MCF 10A (cell line): ENCODE measurements at regions of chr20 and their contacts with region 1.

Region 1: DNA sequence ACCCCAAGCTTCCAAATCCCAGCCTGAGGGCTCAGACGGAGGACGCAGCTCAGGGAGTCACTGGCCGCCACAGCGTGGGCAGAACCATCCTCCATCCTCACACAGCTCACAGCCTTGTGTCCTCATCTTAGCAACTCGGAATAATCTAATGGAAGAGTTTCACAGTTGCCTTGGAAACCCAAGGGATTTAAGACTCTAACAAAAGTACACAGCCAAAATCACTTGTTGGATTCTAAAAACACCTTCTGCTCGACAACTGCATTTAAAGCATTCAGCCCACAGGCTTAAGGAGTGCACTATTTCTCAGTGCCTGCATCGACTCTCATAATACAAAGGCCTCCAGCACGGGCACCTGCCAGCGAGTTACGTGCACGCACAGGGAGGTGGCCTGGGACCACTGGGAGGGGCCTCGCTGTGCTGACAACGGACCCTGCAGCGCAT is 45.4 kb downstream of the ZBTB46 start:
- DNase-seq: no peak
- H3K4me3 Mint-ChIP-seq: no peak overlapping the region
- H3K27ac Mint-ChIP-seq: no peak overlapping the region
- H3K4me1 Mint-ChIP-seq: no peaks in the 10 kb centered on the region
- H3K27me3 Mint-ChIP-seq: no peaks in the 10 kb centered on the region
- CTCF ChIP-seq: no peak

Region 2: DNA sequence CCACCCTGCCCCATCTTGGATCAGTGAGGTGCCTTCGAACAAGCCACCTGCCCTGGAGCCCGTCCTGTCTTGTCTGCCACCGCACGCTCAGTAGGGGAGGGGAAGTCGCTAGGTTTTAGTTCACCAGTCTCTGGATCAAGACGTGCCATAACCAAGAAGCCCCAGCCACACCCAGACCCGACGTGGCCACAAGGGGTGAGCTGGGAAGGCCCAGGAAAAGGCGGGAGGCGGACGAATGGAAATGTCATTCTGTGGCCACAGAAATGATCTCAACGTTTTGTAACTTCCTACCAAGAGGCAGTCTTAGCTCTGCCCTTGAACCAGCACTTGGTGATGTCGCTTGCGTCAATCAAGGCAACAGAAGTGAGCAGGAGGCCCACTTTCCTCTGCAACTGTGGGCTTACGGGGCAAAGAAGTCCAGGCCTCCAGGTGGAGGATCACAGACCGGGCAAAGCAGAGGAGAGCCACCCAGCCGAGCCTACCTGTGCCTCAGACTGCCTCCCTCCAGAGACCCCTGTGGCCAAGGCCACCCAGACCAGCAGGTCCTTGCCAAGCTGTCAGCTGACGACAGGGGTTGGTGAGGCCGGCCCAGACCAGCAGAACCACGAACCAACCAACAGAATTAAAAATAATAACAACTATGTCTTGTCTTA is 173.3 kb before region 1 on chr20:
- CTCF ChIA-PET with region 1: no interaction called
- POLR2A ChIA-PET with region 1: no interaction called
- intact Hi-C with region 1: no loop called
- DNase-seq: no peak
- H3K4me3 Mint-ChIP-seq: no peak overlapping the region
- H3K27ac Mint-ChIP-seq: no peak overlapping the region
- H3K4me1 Mint-ChIP-seq: no peaks in the 10 kb centered on the region
- H3K27me3 Mint-ChIP-seq: no peaks in the 10 kb centered on the region
- CTCF ChIP-seq: no peak

Region 3: GRCh38 chr20:63731392-63731791 is 54.3 kb before region 1 on chr20:
- CTCF ChIA-PET with region 1: no interaction called
- POLR2A ChIA-PET with region 1: no interaction called
- intact Hi-C with region 1: no loop called
- DNase-seq: no peak
- H3K4me3 Mint-ChIP-seq: no peak overlapping the region
- H3K27ac Mint-ChIP-seq: no peak overlapping the region
- H3K4me1 Mint-ChIP-seq: no peaks in the 10 kb centered on the region
- H3K27me3 Mint-ChIP-seq: no peaks in the 10 kb centered on the region
- CTCF ChIP-seq: no peak

Region 4: DNA sequence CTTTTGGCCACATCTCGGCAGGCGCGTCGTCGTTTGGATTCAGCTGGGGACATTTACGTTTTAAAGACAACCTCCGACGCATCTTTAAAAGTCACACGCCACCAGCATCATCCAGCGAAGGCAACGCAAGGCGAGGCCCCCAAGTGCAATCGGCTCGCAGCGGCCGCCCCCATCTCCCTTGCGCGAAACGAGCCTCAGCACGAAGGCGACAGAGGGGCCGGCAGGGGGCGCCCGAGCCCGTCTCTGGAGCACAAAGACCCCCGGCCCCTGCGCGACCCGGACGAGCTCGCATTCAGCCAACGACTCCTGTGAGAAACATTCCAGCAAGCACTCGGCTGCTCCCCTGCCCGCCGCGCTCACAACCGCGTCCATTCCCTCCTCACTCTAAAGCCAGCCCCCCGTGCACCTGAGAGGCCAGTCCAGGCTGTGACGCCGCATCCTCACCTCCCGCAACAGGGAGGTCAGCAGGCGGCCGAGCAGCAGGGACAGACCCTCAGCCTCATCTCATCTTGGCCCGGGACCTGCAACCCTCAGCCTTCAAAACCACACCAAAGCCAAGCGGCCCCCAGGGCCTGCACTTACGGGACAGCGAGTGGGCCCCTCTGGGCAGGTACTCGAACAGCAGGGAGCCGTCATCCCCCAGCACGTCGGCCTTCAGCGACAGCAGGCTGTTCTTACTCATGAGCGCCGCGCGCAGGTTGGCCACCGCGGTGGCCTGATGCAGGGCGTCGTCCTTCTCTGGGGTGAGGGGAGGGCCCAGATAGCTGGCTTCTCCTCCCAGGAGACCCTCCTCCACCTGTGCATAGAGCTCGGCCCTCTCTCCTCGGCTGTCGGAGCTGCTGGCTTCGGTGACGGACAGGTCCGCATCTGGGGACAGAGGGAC is 10.4 kb before region 1 on chr20:
- CTCF ChIA-PET with region 1: interaction called, 33 read pairs
- POLR2A ChIA-PET with region 1: no interaction called
- intact Hi-C with region 1: no loop called
- DNase-seq: no peak
- H3K4me3 Mint-ChIP-seq: no peak overlapping the region
- H3K27ac Mint-ChIP-seq: no peak overlapping the region
- H3K4me1 Mint-ChIP-seq: peaks cover 9% of the 10 kb centered on the region
- H3K27me3 Mint-ChIP-seq: no peaks in the 10 kb centered on the region
- CTCF ChIP-seq: peak; percentile 44

Region 5: GRCh38 chr20:63804308-63804636 is 18.6 kb after region 1 on chr20:
- CTCF ChIA-PET with region 1: interaction called, 10 read pairs
- POLR2A ChIA-PET with region 1: no interaction called
- intact Hi-C with region 1: no loop called
- DNase-seq: no peak
- H3K4me3 Mint-ChIP-seq: no peak overlapping the region
- H3K27ac Mint-ChIP-seq: no peak overlapping the region
- H3K4me1 Mint-ChIP-seq: no peaks in the 10 kb centered on the region
- H3K27me3 Mint-ChIP-seq: no peaks in the 10 kb centered on the region
- CTCF ChIP-seq: no peak

Region 6: DNA sequence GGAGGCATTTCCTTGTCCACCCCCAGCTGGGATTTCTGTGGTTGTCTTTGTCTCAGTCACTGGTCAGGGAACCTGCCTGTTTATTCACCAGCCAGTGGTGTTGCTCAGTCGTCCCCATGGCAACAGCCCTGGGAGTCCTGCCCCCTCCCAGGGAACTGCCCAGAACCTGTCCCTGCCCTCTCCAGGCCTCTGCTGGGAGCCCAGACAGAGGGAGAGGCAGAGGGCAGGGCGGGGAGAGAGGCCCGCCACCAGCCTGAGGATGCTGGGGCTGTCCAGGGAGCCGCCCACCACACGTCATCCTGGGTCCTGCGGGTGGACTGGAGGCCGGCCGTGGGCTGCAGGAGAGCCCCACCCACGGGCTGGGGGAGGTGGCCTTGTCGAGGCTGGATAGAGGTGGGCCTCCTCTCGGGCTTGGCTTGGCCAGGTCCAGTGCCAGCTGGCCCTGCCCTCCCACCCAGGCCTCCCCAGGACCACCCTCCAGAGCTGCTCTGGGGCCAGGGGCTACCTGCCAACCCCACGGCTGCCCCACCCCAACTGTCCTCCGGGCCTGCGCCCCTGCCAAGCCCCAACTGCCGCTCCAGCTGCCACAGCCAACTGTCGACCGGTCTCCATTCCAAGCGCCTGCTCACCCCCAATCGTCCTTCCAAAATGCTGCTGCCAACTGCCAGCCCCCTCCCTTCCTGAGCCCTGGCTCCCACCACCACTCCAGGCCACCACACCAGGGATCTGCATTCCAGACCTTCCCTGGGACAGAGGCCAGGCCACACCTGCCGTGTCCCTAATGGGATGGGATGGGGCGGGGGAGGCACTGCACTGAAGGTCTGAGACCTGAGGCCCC is 49.5 kb after region 1 on chr20:
- CTCF ChIA-PET with region 1: no interaction called
- POLR2A ChIA-PET with region 1: no interaction called
- intact Hi-C with region 1: no loop called
- DNase-seq: peak; percentile 97
- H3K4me3 Mint-ChIP-seq: peak overlapping the region; percentile 44
- H3K27ac Mint-ChIP-seq: no peak overlapping the region
- H3K4me1 Mint-ChIP-seq: peaks cover 5% of the 10 kb centered on the region
- H3K27me3 Mint-ChIP-seq: peaks cover 3% of the 10 kb centered on the region
- CTCF ChIP-seq: no peak